T-cell (primary cell): ENCODE measurements at regions of chrX and their contacts with region 1.

Region 1: DNA sequence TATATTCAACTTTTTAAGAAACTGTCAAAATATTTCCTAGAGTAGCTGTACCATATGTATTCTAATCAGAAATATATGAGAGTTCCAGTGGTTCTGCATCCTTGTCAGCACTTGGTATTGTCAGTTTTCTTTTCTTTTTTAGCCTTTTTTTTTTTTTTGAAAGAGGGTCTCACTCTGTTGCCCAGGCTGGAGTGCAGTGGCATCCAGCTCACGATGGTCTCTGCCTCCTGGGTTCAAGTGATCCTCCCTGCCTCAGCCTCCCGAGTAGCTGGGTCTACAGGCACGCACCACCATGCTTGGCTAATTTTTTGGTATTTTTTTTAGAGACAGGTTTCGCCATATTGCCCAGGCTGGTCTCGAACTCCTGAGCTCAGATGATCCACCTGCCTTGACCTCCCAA is 79.1 kb downstream of the ZFX start:
- DNase-seq: no peak
- ATAC-seq: no peak
- H3K4me3 ChIP-seq: no peak overlapping the region
- H3K4me3 Mint-ChIP-seq: no peak overlapping the region
- H3K27ac ChIP-seq: no peak overlapping the region
- H3K27ac Mint-ChIP-seq: no peak overlapping the region
- H3K4me1 ChIP-seq: no peaks in the 10 kb centered on the region
- H3K4me1 Mint-ChIP-seq: no peaks in the 10 kb centered on the region
- H3K27me3 ChIP-seq: no peaks in the 10 kb centered on the region
- H3K27me3 Mint-ChIP-seq: peaks cover 0 to 4% of the 10 kb centered on the region in 2 donors

Region 2: DNA sequence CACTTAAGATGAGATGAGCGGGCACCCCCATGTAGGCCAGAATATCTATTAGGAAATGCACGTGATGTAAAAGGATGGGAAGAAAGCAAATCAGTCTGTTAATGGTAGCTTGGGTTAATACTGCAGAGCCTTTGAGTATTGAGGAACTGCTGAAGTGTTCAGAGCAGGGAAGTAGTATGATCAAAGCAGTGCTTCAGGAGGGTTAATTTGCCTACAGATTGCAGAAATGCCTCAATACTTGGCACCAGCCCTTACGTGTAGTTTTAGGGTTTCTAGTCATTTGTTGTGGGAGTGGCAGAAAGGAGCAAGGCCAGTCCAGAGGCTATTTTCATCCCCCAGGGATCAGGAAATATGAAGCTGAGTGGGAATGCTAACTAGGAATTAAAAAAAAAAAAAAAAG is 59.4 kb before region 1 on chrX:
- CTCF ChIA-PET with region 1: no interaction called
- POLR2A ChIA-PET with region 1: interaction called in 1 of 2 experiments, 16 read pairs
- DNase-seq: no peak
- ATAC-seq: peak in 1 of 4 experiments; percentile 43
- H3K4me3 ChIP-seq: no peak overlapping the region
- H3K4me3 Mint-ChIP-seq: peak overlapping the region in 2 of 3 donors; percentile 18 to 43
- H3K27ac ChIP-seq: no peak overlapping the region
- H3K27ac Mint-ChIP-seq: peak overlapping the region; percentile 50 to 68
- H3K4me1 ChIP-seq: peaks cover 10 to 16% of the 10 kb centered on the region in 2 experiments
- H3K4me1 Mint-ChIP-seq: peaks cover 63 to 73% (median 71%) of the 10 kb centered on the region in 3 donors
- H3K27me3 ChIP-seq: no peaks in the 10 kb centered on the region
- H3K27me3 Mint-ChIP-seq: no peaks in the 10 kb centered on the region

Region 3: DNA sequence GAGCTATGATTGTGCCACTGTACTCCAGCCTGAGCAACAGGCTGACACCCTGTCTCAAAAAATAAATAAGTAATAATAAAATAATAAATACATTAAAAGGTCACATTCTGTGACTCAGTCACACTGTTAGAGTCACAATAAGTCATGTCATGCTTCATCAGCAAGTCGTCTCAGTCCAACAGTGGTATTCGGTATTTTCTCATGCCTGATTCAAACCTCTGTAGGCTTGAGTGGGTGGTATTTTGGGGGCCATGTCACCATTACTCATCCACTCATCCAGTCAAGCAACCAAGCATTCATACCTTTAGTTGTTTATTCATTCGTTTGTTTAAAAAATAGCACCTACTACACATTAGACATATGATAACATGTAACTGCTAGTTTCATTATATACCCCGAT is 38.4 kb after region 1 on chrX:
- CTCF ChIA-PET with region 1: no interaction called
- POLR2A ChIA-PET with region 1: no interaction called
- DNase-seq: no peak
- ATAC-seq: no peak
- H3K4me3 ChIP-seq: no peak overlapping the region
- H3K4me3 Mint-ChIP-seq: no peak overlapping the region
- H3K27ac ChIP-seq: no peak overlapping the region
- H3K27ac Mint-ChIP-seq: no peak overlapping the region
- H3K4me1 ChIP-seq: no peaks in the 10 kb centered on the region
- H3K4me1 Mint-ChIP-seq: peaks cover 0 to 2% (median 0%) of the 10 kb centered on the region in 3 donors
- H3K27me3 ChIP-seq: no peaks in the 10 kb centered on the region
- H3K27me3 Mint-ChIP-seq: peaks cover 1 to 38% of the 10 kb centered on the region in 2 donors